Colonic mucosa (tissue), 4 donors: ENCODE measurements at regions of chr11 and their contacts with region 1.

Region 1: GRCh38 chr11:17504330-17505107 is 27.9 kb upstream of the ABCC8 start:
- DNase-seq: peak; percentile 76
- H3K4me3 ChIP-seq: no peak overlapping the region
- H3K27ac ChIP-seq: no peak overlapping the region
- H3K4me1 ChIP-seq: no peaks in the 10 kb centered on the region
- H3K27me3 ChIP-seq: no peaks in the 10 kb centered on the region
- CTCF ChIP-seq: peak; percentile 95

Region 2: GRCh38 chr11:17230867-17231851 is 273.4 kb before region 1 on chr11:
- intact Hi-C with region 1: loop called (anchors 10 kb)
- DNase-seq: no peak
- H3K4me3 ChIP-seq: no peak overlapping the region
- H3K27ac ChIP-seq: no peak overlapping the region
- H3K4me1 ChIP-seq: no peaks in the 10 kb centered on the region
- H3K27me3 ChIP-seq: no peaks in the 10 kb centered on the region
- CTCF ChIP-seq: no peak

Region 3: DNA sequence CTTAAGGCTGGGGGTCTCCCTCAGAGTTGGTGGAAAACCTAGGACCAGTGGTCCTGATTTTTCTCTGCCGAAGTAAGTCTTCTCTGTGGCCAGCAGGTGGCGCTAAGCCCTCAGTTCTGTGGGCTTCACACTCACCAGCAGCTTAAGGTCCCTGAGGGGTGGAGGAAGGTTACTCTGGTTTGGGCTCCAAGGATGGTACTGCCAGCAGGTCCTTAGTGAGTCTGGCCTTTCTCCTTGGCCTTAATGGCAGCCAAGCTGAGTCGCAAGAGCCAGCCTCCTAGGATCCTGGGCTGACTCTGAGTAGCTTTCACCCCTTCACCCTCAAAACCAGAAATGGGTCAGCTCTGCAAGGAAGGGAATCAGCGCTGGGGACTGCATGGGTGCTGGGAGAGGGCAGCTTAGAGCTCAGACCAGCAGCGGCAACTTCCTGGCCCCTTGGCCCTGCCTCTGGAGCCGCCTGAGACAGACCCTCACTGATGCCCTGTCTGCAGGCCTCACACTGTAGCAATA is 120.5 kb before region 1 on chr11:
- intact Hi-C with region 1: loop called (anchors 2 kb)
- DNase-seq: peak; percentile 80
- H3K4me3 ChIP-seq: no peak overlapping the region
- H3K27ac ChIP-seq: no peak overlapping the region
- H3K4me1 ChIP-seq: no peaks in the 10 kb centered on the region
- H3K27me3 ChIP-seq: no peaks in the 10 kb centered on the region
- CTCF ChIP-seq: peak; percentile 89